Activated CD4-positive, alpha-beta T cell treated with anti-CD3 and anti-CD28 coated beads for 36 hours (primary cell): ENCODE measurements at regions of chr3 and their contacts with region 1.

Region 1: GRCh38 chr3:9384141-9384853 is 13.1 kb upstream of the SETD5 start:
- DNase-seq: no peak
- ATAC-seq: peak; percentile 29
- H3K4me3 Mint-ChIP-seq: no peak overlapping the region
- H3K27ac Mint-ChIP-seq: peak overlapping the region; percentile 40
- H3K4me1 Mint-ChIP-seq: peaks cover 19% of the 10 kb centered on the region
- H3K27me3 Mint-ChIP-seq: no peaks in the 10 kb centered on the region

Region 2: DNA sequence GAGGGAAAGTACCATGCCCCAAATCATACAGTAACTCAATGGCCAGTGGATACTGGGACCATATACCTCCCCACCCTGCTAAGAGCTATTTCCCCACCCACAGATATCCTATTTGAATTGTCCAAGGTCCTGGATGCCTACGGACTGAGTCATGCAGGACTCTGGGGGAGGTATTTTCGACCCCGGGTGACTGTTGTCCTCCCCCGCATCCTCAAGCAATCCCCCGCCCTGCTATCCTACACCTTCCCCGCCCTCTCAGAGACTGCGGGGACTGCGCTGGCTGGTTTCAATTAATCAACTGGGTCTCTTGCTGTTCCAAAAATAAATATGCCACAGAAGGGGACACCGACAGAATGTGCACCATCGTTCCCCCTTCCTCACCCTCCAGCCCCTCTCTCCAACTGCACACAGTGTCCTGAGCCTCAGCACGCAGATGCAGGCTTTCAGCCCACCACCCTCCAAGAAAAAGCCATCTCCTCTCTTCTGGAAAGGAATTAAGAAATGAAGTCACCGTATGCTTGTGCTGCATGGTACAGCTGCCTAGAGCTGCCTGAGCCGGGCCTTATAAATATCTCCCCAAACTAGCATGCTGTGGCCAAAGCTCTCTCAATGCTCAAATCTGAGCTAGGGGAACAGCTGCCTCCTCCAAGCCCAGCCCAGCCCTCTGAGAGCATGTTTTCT is 642.6 kb before region 1 on chr3:
- CTCF ChIA-PET with region 1: no interaction called
- POLR2A ChIA-PET with region 1: no interaction called
- intact Hi-C with region 1: no loop called
- DNase-seq: no peak
- ATAC-seq: no peak
- H3K4me3 Mint-ChIP-seq: no peak overlapping the region
- H3K27ac Mint-ChIP-seq: no peak overlapping the region
- H3K4me1 Mint-ChIP-seq: no peaks in the 10 kb centered on the region
- H3K27me3 Mint-ChIP-seq: peaks cover 9% of the 10 kb centered on the region

Region 3: GRCh38 chr3:9373465-9373864 is 10.8 kb before region 1 on chr3:
- CTCF ChIA-PET with region 1: interaction called, 5 read pairs
- POLR2A ChIA-PET with region 1: interaction called, 5 read pairs
- intact Hi-C with region 1: loop called in 1 of 2 experiments (anchors 1 kb)
- DNase-seq: no peak
- ATAC-seq: no peak
- H3K4me3 Mint-ChIP-seq: no peak overlapping the region
- H3K27ac Mint-ChIP-seq: no peak overlapping the region
- H3K4me1 Mint-ChIP-seq: peaks cover 40% of the 10 kb centered on the region
- H3K27me3 Mint-ChIP-seq: no peaks in the 10 kb centered on the region

Region 4: DNA sequence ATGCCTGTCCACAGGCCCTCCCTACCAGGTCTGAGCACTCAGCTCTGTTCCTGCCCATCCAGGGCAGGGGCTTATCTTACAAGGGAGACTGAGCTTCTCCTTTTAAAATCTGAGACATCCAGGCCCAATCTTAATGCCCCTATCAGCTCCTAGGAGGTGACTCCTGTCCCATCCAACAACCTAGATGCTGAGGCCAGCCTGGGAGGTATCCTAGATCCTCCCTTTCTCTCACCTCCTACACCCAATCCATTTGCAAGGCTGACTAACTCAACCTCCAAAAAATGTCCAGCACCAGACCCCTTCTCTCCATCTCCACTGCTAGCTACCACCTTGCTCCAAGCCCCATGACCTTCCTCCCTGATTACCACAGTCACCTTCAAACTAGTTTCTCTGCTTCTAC is 151.9 kb after region 1 on chr3:
- CTCF ChIA-PET with region 1: no interaction called
- POLR2A ChIA-PET with region 1: no interaction called
- intact Hi-C with region 1: no loop called
- DNase-seq: no peak
- ATAC-seq: no peak
- H3K4me3 Mint-ChIP-seq: no peak overlapping the region
- H3K27ac Mint-ChIP-seq: no peak overlapping the region
- H3K4me1 Mint-ChIP-seq: no peaks in the 10 kb centered on the region
- H3K27me3 Mint-ChIP-seq: peaks cover 4% of the 10 kb centered on the region

Region 5: DNA sequence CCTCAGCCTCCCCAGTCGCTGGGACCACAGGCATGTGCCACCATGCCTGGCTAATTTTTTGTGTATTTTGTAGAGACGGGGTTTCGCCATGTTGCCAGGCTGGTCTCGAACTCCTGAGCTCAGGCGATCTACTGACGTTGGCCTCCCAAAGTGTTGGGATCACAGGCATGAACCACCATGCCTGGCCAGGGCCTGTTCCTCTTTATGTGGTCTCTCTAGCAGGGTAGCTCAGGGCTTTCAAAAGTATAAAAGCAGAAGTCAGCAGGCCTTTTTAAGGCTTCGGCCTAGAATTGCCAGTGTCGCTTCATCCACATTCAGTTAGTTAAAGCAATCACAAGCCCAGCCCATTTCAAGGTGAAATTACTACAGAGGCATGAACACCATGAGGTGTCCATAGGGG is 764.9 kb after region 1 on chr3:
- CTCF ChIA-PET with region 1: no interaction called
- POLR2A ChIA-PET with region 1: no interaction called
- intact Hi-C with region 1: no loop called
- DNase-seq: no peak
- ATAC-seq: no peak
- H3K4me3 Mint-ChIP-seq: no peak overlapping the region
- H3K27ac Mint-ChIP-seq: peak overlapping the region; percentile 3
- H3K4me1 Mint-ChIP-seq: peaks cover 21% of the 10 kb centered on the region
- H3K27me3 Mint-ChIP-seq: no peaks in the 10 kb centered on the region